Transverse colon (tissue), 4 donors: ENCODE measurements at regions of chr20 and their contacts with region 1.

Region 1: DNA sequence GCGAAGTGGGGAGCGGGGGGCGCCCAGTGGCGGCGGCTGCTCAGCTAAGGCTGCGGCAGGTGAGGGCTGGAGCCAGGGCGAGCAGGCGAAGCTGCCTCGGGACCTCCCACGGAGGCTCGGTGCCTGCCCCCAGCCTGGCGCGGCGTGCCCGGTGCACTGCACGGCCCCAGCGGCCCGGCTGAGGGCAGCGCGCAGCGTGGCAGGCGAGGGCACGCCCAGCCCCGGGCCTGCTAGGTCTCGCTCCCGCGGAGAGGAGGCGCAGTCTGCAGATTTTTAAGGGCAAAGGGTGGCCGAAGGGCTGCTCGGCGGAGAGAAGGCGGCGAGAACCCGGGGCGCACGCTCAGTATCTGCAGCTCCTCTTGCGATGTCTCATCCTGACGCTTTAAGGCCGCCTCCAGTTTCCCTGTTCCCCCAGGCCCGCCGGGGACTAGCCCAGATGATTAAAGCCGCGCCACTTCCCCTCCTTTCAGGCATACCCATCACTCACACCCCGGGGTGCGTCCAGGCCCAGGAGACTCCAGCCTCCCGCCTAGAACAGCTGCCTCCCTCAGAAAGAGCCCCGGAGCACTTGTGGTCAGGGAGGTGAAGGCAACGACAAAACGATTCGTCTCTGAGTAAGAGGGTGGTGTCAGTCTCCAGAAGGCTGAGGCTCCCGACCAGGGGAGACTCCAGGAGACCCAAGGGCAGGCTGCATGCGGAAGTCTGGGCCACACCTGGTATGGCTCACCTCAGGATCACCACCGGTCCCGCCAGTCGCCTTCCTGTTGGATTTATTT is at the start of gene FERMT1:
- DNase-seq: peak; percentile 82
- H3K4me3 ChIP-seq: peak within 1 kb of the TSS; percentile 27 to 79 (median 54)
- H3K27ac ChIP-seq: peak within 1 kb of the TSS; percentile 78 to 88 (median 88)
- H3K4me1 ChIP-seq: peaks cover 0 to 69% (median 25%) of the 10 kb centered on the region in 4 donors
- H3K27me3 ChIP-seq: peaks cover 39% of the 10 kb centered on the region
- CTCF ChIP-seq: peak in 2 of 5 experiments; percentile 18 to 33
- EP300 ChIP-seq: no peak
- POLR2A ChIP-seq: peak; percentile 82
- total RNA-seq, gene FERMT1: 23.2 to 31.9 (median 29.7) TPM

Region 2: DNA sequence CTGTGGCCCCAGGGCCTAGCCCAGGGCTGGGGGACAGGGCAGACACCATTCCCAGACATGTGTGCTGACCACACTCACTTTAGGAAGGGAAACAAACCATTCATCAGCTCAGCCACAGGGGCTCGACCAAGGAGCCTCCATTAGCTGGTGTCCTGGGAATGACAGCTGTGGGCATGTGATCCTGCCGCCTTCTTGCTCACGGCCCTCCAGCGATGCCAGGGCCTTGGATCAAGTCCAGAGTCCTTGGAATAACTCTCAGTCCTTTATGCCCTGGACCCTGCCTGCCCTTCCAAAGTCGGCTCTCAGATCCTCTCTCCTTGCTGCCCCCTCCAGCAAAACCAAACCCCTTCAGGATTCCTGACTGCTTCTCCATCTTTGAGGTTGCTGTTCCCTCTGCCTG is 1942.7 kb before region 1 on chr20:
- in situ Hi-C with region 1: no loop called
- intact Hi-C with region 1: loop called (anchors 5 kb)
- DNase-seq: no peak
- H3K4me3 ChIP-seq: no peak overlapping the region
- H3K27ac ChIP-seq: no peak overlapping the region
- H3K4me1 ChIP-seq: no peaks in the 10 kb centered on the region
- H3K27me3 ChIP-seq: no peaks in the 10 kb centered on the region
- CTCF ChIP-seq: no peak
- EP300 ChIP-seq: no peak
- POLR2A ChIP-seq: no peak